Activated CD4-positive, alpha-beta memory T cell treated with anti-CD3 and anti-CD28 coated beads for 36 hours (primary cell): ENCODE measurements at regions of chr14 and their contacts with region 1.

Region 1: DNA sequence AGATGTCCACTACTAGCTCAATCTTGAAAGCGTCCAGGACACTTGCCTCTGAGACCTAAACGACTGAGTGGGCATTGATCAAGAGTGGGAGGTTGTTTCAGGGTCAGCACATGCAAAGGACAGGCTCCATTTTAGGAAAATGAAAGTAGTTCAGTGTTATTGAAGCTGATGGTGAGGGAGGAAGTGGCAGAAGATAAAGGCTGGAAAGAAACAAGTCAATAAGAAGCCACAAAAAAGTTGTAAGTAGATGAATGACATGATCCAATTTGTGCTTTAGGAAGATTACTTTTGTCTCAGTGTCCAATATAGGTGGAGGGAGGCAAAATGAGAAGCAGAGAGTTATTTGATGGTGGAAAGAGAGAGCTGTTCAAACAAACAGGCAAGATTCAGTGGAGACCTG is 22.0 kb downstream of the GPR65 start:
- DNase-seq: no peak
- H3K4me3 Mint-ChIP-seq: no peak overlapping the region
- H3K27ac Mint-ChIP-seq: peak overlapping the region; percentile 10
- H3K4me1 Mint-ChIP-seq: peaks cover 72% of the 10 kb centered on the region
- H3K27me3 Mint-ChIP-seq: no peaks in the 10 kb centered on the region

Region 2: GRCh38 chr14:87952307-87953094 is 74.4 kb before region 1 on chr14:
- CTCF ChIA-PET with region 1: no interaction called
- POLR2A ChIA-PET with region 1: no interaction called
- intact Hi-C with region 1: no loop called
- DNase-seq: no peak
- H3K4me3 Mint-ChIP-seq: no peak overlapping the region
- H3K27ac Mint-ChIP-seq: peak overlapping the region; percentile 62
- H3K4me1 Mint-ChIP-seq: peaks cover 21% of the 10 kb centered on the region
- H3K27me3 Mint-ChIP-seq: no peaks in the 10 kb centered on the region

Region 3: DNA sequence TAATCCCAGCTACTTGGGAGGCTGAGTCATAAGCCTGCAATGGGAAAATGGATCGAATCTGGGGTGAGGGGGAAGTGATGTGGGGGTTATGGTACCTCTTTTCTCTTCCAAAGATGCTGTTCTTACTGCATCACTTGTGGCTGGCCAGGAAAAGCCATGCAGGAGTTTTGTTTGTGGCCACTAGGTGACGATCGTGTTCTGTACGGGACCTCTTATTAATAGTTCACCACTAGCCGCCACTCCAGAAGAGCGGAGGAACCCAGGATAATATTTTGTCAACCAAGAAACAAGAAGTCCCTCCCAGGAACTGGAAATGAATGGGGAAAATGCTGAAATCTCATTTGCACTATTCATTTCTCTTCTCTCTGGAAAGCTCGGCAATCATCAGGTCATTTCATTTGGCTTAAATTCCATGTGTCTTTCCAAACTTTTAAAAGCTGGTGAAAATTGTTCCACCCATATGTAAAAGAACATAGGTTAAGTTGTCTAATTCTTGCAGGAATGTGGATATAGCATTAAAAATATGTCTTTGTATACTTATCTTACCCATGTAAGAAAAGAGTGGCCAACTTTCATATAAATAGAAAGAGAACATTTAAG is 13.0 kb before region 1 on chr14:
- CTCF ChIA-PET with region 1: interaction called, 11 read pairs
- POLR2A ChIA-PET with region 1: interaction called, 3 read pairs
- intact Hi-C with region 1: no loop called
- DNase-seq: peak; percentile 48
- H3K4me3 Mint-ChIP-seq: no peak overlapping the region
- H3K27ac Mint-ChIP-seq: no peak overlapping the region
- H3K4me1 Mint-ChIP-seq: peaks cover 56% of the 10 kb centered on the region
- H3K27me3 Mint-ChIP-seq: no peaks in the 10 kb centered on the region

Region 4: GRCh38 chr14:88044851-88045339 is 18.0 kb after region 1 on chr14:
- CTCF ChIA-PET with region 1: interaction called, 3 read pairs
- POLR2A ChIA-PET with region 1: interaction called, 3 read pairs
- intact Hi-C with region 1: loop called (anchors 2 kb)
- DNase-seq: peak; percentile 18
- H3K4me3 Mint-ChIP-seq: no peak overlapping the region
- H3K27ac Mint-ChIP-seq: peak overlapping the region; percentile 77
- H3K4me1 Mint-ChIP-seq: peaks cover 15% of the 10 kb centered on the region
- H3K27me3 Mint-ChIP-seq: no peaks in the 10 kb centered on the region